Right ventricle myocardium inferior (tissue), 1 donor: ENCODE measurements at regions of chr9 and their contacts with region 1.

Region 1: DNA sequence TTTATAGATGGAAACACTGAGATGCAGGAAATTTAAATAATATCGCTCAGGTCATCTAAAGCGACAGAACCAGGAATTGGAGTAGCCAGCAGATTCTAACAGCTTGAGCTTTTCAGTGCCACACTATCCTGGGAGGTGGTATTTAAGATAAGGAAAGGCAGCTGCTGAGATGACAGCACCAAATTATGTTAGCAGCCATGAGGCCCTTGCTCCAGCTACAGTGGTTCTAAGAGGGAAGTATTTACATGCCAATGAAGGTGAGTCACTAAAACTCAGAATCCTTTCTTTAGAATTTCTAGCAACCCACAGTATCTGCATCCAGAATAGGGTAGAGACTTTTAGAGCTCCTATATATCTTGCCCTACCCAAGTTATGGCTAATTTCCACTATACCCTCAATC is 127.0 kb upstream of the VLDLR start:
- DNase-seq: no peak
- ATAC-seq: no peak

Region 2: GRCh38 chr9:2427120-2427891 is 67.3 kb before region 1 on chr9:
- intact Hi-C with region 1: loop called (anchors 5 kb)
- DNase-seq: peak; percentile 75
- ATAC-seq: peak; percentile 90

Region 3: DNA sequence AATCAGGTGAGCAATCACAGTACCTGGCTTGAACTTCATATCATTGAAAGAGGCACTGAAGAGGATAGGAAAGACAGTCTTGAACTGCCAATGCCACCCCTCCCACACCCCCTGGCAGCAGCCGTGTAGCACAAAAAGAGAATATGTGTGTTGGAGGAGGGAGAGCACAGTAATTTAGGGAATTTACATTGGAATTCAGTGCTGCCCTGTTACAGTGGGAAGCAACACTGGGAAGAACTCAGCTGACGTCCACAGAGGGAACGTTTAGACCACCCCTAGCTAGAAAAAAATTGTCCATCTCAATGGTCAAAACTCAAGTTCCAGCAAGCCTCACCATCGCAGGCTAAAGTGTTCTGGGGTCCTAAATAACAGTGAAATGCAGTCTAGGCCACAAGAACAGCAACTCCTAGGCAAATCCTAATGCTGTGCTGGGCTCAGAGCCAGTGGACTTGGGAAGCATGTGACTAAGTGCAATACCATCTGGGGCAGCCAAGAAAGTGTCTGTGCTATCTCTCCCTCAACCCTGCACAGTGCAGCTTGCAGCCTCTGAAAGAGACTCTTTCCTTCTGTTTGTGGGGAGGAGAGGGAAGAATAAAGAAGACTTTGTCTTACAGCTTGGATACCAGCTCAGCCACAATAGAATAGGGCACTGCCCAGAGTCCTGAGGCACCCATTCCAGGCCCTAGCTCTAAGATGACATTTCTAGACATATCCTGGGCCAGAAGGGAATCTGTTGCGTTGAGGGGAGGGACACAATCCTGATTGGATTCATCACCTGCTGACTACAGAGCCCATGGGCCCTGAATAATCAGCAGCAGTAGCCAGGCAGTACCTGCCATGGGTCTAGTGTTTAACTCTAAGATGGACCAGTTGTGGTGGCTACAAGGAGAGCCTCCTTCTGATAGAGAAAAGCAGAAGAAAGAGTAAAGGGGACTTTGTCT is 64.9 kb after region 1 on chr9:
- intact Hi-C with region 1: loop called (anchors 5 kb)
- DNase-seq: peak; percentile 89
- ATAC-seq: peak; percentile 99

Region 4: GRCh38 chr9:2570615-2571479 is 76.3 kb after region 1 on chr9:
- intact Hi-C with region 1: no loop called
- DNase-seq: peak; percentile 92
- ATAC-seq: peak; percentile 90

Region 5: DNA sequence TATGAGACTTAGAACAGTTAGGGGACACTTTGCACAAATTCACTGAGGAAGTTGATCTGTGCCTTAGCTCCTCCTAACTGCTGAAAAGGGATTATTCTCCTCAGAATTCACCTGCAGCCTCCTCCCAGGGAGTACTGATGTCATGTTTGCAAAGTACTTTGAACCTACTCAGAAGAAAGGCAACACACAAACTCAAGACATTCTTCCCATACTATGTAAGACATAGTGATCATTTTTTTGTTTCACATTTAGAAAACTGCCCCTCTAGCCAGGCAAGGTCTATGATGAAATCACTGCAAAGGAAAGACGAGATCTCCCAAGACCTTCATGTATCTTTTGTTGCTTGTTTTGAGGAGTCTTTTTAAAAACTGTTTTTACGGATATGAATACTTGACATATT is 116.4 kb after region 1 on chr9:
- intact Hi-C with region 1: no loop called
- DNase-seq: no peak
- ATAC-seq: no peak

Region 6: GRCh38 chr9:2620919-2621679 is 126.5 kb after region 1 on chr9:
- intact Hi-C with region 1: loop called (anchors 5 kb)
- DNase-seq: peak; percentile 91
- ATAC-seq: peak; percentile 87

Region 7: DNA sequence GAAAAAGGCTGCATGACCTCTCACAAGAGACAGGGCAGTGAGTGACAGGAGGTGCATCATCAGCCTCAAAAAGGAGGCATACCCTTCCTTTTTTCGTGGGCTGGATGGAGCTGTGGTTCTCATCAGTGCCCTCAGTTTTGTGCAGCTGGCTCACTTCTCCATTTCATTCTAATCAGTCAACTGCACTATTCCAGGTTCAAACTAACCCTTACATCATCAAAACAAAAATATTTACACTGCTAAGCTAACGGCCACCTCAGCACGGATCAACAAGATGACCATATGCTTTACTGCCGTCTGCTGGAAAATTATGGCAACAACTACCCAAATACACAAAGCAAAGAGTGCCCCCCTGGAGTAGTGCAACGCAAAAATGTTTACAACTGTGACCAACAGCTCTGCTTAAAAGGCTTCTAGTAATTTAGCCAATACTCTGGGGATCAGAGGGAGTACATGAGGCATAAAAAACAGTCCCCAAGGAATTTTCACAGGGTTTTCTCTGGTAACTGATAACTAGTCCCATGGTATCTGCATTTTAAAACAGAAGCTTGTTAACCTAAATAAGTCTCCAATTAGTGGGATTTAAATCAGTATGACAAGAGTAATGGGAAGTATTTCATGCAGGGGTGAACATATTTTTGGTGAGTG is 233.5 kb after region 1 on chr9:
- intact Hi-C with region 1: loop called (anchors 5 kb)
- DNase-seq: no peak
- ATAC-seq: peak; percentile 82

Region 8: GRCh38 chr9:2800393-2801179 is 306.0 kb after region 1 on chr9:
- intact Hi-C with region 1: loop called (anchors 5 kb)
- DNase-seq: no peak
- ATAC-seq: peak; percentile 69